Ovary (tissue), 10 donors: ENCODE measurements at regions of chr3 and their contacts with region 1.

Region 1: GRCh38 chr3:195522254-195523023 is 20.7 kb downstream of the PPP1R2 start:
- DNase-seq: no peak
- H3K4me3 ChIP-seq: no peak overlapping the region
- H3K27ac ChIP-seq: no peak overlapping the region
- H3K4me1 ChIP-seq: no peaks in the 10 kb centered on the region
- H3K27me3 ChIP-seq: no peaks in the 10 kb centered on the region
- CTCF ChIP-seq: peak; percentile 48 to 85 (median 75)
- EP300 ChIP-seq: no peak
- POLR2A ChIP-seq: no peak

Region 2: GRCh38 chr3:194682694-194683310 is 839.6 kb before region 1 on chr3:
- intact Hi-C with region 1: loop called in 2 of 4 experiments (anchors 10 kb)
- DNase-seq: peak; percentile 54 to 75 (median 68)
- H3K4me3 ChIP-seq: no peak overlapping the region
- H3K27ac ChIP-seq: no peak overlapping the region
- H3K4me1 ChIP-seq: peaks cover 5% of the 10 kb centered on the region
- H3K27me3 ChIP-seq: no peaks in the 10 kb centered on the region
- CTCF ChIP-seq: peak; percentile 76 to 87 (median 81)
- EP300 ChIP-seq: no peak
- POLR2A ChIP-seq: no peak

Region 3: DNA sequence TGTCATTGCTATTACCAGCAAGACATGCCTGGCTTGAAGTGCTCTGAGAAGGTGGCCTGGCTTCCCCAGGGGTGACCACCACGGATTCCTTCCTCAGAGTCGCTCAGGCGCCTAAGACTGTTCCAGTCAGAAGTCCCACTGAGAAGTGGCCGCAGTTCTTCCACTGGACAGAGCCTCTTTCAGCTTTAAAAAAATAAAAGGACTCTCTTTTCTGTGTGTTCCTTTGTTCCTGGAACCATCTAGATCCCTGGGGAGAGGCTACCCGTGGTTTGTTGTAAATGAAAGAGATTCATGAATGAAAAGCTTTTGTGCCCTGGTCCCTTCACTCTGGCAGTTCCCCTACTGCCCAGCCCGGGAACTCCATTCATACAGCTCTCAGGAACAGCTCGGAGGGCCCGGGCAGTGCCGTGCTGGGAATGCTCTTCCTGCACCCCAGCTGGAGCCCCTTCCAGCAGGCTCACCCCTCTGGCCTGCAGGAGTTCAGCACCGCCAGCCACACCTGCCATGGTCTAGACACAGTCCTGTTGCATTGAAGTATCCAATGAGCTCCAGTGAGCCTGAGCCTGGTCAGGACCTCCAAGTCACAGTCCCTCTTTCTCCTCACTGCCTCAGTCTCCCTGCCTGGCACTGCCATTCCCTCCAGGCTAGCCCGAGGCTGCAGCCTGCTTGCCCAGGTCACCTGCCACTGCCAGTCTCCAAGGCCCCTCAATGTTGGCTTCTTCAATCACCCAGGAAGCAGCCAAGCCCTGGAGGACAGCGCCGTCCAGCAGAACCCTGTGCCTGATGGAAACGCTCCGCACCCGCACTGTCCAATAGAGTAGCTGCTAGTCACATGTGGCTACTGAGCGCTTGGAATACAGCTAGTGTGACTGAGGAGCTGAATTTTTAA is 326.9 kb before region 1 on chr3:
- intact Hi-C with region 1: no loop called
- DNase-seq: peak in 1 of 5 donors; percentile 10
- H3K4me3 ChIP-seq: no peak overlapping the region
- H3K27ac ChIP-seq: no peak overlapping the region
- H3K4me1 ChIP-seq: no peaks in the 10 kb centered on the region
- H3K27me3 ChIP-seq: no peaks in the 10 kb centered on the region
- CTCF ChIP-seq: no peak
- EP300 ChIP-seq: no peak
- POLR2A ChIP-seq: no peak

Region 4: DNA sequence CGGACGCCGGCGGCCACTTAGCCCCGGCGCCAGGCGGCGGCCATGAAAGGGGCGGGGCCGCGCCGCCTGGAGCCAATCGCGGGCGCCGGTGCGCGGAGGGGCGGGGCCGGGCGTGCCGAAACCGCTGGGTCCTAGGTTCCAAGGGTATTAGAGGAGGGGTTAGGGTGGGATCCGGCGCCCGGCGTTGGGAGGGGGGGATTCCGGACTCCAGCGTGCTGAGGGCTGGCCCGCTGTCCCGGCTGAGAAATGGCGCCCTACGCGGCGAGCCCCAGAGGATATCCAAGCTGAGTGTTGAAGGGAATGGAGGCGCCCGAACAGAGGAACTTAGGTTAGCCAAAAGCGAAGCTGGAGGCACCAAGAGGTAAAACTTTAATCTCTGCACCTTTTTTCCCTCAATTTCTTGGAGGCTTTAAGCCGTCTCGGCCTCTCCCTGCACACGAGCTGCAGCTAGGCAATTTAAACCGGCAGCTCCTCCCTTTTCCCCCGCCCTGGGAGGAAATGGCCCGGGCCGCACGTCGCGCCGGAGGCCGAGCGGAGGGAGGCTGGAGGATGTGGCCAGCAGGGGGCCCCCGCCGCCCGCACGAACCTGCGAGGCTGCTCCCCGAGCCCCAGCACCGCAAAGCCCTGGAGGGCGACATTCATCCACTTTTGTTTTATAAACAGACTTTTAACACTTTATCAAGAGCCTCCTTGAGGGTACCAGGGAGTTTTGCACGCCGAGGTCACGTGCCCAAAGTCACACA is 251.2 kb before region 1 on chr3 and contains the start of gene XXYLT1:
- intact Hi-C with region 1: loop called (anchors 2 to 5 kb)
- DNase-seq: peak; percentile 83 to 94 (median 88)
- H3K4me3 ChIP-seq: peak within 1 kb of the TSS; percentile 73
- H3K27ac ChIP-seq: peak within 1 kb of the TSS; percentile 35 to 74
- H3K4me1 ChIP-seq: peaks cover 1% of the 10 kb centered on the region
- H3K27me3 ChIP-seq: no peaks in the 10 kb centered on the region
- CTCF ChIP-seq: peak; percentile 90 to 96 (median 95)
- EP300 ChIP-seq: no peak
- POLR2A ChIP-seq: no peak
- total RNA-seq, gene XXYLT1: 7.3 to 13.6 (median 10.2) TPM

Region 5: GRCh38 chr3:195442573-195443390 is 79.7 kb before region 1 on chr3 and contains the start of gene ACAP2:
- intact Hi-C with region 1: loop called in 1 of 4 experiments (anchors 10 kb)
- DNase-seq: peak; percentile 100
- H3K4me3 ChIP-seq: peak within 1 kb of the TSS; percentile 99
- H3K27ac ChIP-seq: peak within 1 kb of the TSS; percentile 79 to 89
- H3K4me1 ChIP-seq: peaks cover 5% of the 10 kb centered on the region
- H3K27me3 ChIP-seq: no peaks in the 10 kb centered on the region
- CTCF ChIP-seq: no peak
- EP300 ChIP-seq: no peak
- POLR2A ChIP-seq: peak; percentile 93
- total RNA-seq, gene ACAP2: 42.4 to 66.8 (median 53.5) TPM

Region 6: GRCh38 chr3:195458316-195458717 is 64.1 kb before region 1 on chr3:
- intact Hi-C with region 1: loop called in 1 of 4 experiments (anchors 10 kb)
- DNase-seq: no peak
- H3K4me3 ChIP-seq: no peak overlapping the region
- H3K27ac ChIP-seq: no peak overlapping the region
- H3K4me1 ChIP-seq: peaks cover 3% of the 10 kb centered on the region
- H3K27me3 ChIP-seq: no peaks in the 10 kb centered on the region
- CTCF ChIP-seq: no peak
- EP300 ChIP-seq: no peak
- POLR2A ChIP-seq: no peak

Region 7: GRCh38 chr3:195468391-195468776 is 54.1 kb before region 1 on chr3:
- intact Hi-C with region 1: no loop called
- DNase-seq: no peak
- H3K4me3 ChIP-seq: no peak overlapping the region
- H3K27ac ChIP-seq: no peak overlapping the region
- H3K4me1 ChIP-seq: peaks cover 3% of the 10 kb centered on the region
- H3K27me3 ChIP-seq: no peaks in the 10 kb centered on the region
- CTCF ChIP-seq: no peak
- EP300 ChIP-seq: no peak
- POLR2A ChIP-seq: no peak